Adrenal gland (tissue), 19 donors: ENCODE measurements at regions of chr7 and their contacts with region 1.

Region 1: DNA sequence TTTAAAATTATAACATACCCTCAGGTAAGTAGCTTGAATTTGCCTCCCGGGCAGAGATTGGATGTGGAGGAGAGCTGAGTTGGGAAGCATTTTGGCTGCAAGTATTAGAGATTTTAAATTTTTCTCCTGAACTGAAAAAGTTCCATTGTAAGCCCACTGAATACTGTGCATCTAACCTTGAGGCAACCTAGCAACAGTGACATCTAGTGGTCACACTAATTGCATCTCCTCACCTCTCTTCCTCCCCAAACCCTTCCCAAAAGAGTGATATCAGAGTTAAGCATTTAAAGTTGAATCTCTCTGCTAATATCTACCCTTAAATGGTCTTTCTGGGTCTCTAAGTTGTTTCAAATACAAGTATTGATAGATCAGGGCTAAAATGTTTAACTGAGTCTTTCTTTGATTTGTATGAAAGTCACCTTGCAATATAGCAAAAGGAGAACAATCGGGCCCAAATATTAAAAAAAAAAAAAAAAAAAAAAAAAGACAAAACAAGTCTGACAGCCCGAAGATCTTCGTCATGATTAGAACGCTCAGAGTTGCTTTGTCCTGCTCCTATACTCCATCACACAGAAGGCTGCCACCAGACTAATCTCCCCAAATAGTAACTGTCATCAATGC is 40.4 kb upstream of the DLX5 start:
- DNase-seq: peak in 5 of 7 donors; percentile 18 to 37 (median 18)
- H3K4me3 ChIP-seq: no peak overlapping the region
- H3K27ac ChIP-seq: no peak overlapping the region
- H3K4me1 ChIP-seq: no peaks in the 10 kb centered on the region
- H3K27me3 ChIP-seq: no peaks in the 10 kb centered on the region
- CTCF ChIP-seq: peak in 5 of 6 experiments; percentile 47 to 70 (median 56)
- POLR2A ChIP-seq: no peak

Region 2: DNA sequence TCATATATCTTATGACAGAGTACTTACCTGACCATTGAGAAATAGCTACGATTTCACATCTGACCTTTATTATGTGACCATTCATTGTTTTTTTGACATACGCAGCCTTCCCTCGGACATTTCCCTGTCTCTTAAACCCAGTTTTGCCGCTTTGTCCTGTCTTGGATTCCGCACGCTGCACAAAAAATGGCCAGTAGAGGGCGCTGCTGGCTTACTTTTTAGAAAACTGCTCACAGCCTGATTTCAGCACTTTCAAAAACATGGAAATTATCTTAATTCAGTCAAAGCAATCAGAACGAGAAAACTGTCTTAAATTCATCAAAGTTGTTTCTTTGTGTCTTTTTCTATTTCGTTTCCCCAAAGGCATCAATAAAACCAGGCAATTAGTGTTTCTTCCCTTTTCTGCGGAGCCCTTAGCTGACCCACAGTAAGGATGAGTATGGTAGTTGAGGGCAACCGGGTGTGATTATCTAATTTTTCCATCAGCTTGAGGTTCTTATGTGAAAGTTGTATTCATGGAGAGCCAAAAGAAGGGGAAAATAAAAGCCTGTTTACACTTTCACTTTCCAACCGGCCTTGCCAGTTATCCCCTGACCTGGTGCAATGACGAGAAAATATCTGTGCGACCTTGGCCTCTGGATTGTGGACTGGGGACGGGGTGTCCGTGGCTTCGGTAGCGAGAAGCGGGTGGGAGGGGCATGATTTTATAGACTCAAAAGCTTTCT is 1148.3 kb before region 1 on chr7:
- intact Hi-C with region 1: loop called in 1 of 2 experiments (anchors 10 kb)
- DNase-seq: peak; percentile 71 to 95 (median 87)
- H3K4me3 ChIP-seq: peak overlapping the region in 3 of 4 donors; percentile 0 to 45 (median 42)
- H3K27ac ChIP-seq: no peak overlapping the region
- H3K4me1 ChIP-seq: peaks cover 0 to 6% of the 10 kb centered on the region in 2 donors
- H3K27me3 ChIP-seq: no peaks in the 10 kb centered on the region
- CTCF ChIP-seq: peak; percentile 82 to 98 (median 88)
- POLR2A ChIP-seq: no peak

Region 3: DNA sequence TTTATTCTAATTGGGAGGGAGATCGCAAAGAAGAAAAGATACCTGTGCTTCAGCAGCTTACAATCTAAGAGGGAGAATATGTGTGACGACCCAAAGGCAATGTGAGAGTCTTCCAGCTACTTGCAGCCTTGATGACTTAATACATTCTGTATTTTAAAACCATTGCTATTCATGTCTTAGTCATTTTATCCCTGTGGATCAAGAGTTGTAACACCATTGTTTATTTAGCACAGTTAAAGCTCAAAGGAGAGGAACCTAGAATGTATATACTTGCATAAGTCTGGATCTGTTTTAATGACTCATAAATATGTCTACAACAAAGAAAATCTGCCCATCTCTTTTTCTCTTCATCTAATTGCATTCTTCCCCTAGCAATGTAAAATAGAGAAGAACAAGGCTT is 177.7 kb before region 1 on chr7:
- intact Hi-C with region 1: no loop called
- DNase-seq: no peak
- H3K4me3 ChIP-seq: no peak overlapping the region
- H3K27ac ChIP-seq: no peak overlapping the region
- H3K4me1 ChIP-seq: no peaks in the 10 kb centered on the region
- H3K27me3 ChIP-seq: no peaks in the 10 kb centered on the region
- CTCF ChIP-seq: no peak
- POLR2A ChIP-seq: no peak